ENCODE measurements at regions of chr1 and their contacts with region 1.

Region 1: DNA sequence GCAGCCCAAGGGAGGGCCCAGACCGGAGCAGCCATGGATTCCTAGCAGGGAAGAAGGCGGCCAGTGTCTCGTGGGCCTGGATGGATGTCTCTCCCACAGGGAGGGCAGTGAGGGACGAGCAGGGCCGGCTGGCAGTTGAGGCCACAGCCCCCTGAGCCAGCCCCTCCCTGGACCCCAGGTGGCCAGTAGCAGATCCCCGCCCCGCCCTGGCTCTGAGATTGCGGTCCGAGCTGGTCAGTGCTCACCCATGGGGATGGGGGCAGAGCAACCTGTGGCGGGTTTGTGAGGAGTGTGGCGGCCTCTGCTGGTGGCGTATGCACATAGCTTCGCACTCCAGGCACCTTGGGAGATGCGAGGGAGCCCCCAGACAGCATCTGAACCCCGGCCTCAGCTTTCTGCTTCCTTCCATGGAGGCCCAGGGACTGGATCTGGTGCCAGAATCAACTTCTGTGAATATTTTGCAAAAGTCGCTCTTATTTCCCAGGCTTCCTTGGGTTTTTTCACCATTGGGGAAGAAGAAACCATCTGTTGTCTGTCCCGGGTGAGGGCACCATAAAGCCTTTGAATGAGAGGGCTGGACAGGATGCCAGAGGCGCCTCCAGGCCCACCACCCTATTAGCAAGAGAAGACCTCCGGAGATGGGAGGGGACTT is 8.4 kb upstream of the KCNN3 start:
- DNase-seq: peak; percentile 80 to 91
- ATAC-seq: peak; percentile 94 to 98 (median 96)
- H3K4me3 ChIP-seq: no peak overlapping the region
- H3K27ac ChIP-seq: no peak overlapping the region
- H3K4me1 ChIP-seq: peaks cover 6% of the 10 kb centered on the region
- H3K27me3 ChIP-seq: no peaks in the 10 kb centered on the region
- CTCF ChIP-seq: peak; percentile 92

Region 2: DNA sequence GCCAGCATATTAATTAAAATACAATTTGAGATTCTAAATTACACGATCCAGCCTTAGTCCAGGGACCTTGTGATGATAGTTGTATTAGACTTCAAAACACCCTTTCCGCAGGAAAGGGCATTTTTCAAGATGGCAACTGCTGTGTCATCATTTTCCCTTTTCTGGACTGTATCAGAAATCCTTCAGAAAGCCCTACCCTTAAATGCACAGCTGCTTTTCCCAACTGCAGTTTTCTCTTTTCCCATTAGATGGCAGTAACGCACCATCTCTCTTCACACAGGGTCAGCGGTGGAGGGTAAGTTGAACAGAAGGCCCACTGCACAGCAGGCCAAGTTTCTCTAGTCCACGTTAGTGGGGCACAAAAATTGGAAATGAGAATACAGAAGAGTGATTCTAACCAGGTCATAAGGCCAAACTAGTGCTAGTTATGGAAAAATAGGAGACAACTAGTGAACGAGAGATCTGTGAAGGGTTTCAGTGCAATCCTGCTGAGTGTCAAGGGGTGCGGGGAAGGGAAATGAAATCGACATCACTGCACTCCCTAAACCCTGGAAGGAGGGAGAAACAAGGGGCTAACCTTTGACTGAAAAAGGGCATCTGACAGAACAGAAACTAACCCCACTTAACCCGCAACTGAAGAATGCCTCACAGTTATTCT is 398.6 kb before region 1 on chr1:
- intact Hi-C with region 1: loop called in 1 of 2 experiments (anchors 5 kb)
- DNase-seq: no peak
- ATAC-seq: peak; percentile 80 to 95 (median 88)
- H3K4me3 ChIP-seq: no peak overlapping the region
- H3K27ac ChIP-seq: no peak overlapping the region
- H3K4me1 ChIP-seq: peaks cover 5% of the 10 kb centered on the region
- H3K27me3 ChIP-seq: no peaks in the 10 kb centered on the region
- CTCF ChIP-seq: peak; percentile 93

Region 3: DNA sequence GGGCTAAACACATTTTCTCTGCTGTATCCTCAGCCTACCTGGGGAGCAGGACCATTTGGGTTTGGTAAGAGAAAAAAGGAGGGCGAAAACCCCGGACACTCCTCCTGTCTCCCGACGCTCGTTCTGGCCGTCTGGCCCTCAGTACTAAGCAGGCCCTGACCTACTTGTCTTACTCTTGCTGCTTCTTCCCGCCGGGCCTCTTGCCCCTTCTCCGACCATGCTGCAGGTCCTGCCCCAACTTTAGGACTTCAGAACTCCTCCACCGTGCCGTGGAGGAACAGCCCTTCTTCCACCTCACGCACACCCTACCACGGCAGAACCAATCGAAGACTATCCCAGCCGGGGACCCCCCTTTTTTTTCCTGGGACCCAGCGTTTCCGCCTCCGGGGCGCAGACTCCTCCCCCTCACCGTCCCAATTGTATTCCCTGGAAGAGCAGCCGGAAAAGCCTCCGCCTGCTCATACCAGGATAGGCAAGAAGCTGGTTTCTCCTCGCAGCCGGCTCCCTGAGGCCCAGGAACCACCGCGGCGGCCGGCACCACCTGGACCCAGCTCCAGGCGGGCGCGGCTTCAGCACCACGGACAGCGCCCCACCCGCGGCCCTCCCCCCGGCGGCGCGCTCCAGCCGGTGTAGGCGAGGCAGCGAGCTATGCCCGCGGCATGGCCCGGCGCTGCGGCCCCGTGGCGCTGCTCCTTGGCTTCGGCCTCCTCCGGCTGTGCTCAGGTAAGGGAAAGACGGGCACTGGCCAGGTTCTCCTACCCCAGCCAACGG is 310.9 kb before region 1 on chr1 and contains the start of gene CHRNB2:
- intact Hi-C with region 1: loop called in 1 of 2 experiments (anchors 5 kb)
- DNase-seq: peak; percentile 68 to 83
- ATAC-seq: peak; percentile 93 to 98 (median 96)
- H3K4me3 ChIP-seq: peak within 1 kb of the TSS; percentile 44
- H3K27ac ChIP-seq: no peak within 1 kb of the TSS
- H3K4me1 ChIP-seq: peaks cover 4% of the 10 kb centered on the region
- H3K27me3 ChIP-seq: peaks cover 0 to 6% (median 0%) of the 10 kb centered on the region in 3 donors
- CTCF ChIP-seq: no peak
- total RNA-seq, gene CHRNB2: 0.08 TPM in 1 of 4 donors, not detected in the others

Region 4: GRCh38 chr1:154669464-154670282 is 208.8 kb before region 1 on chr1:
- intact Hi-C with region 1: loop called (anchors 1 kb)
- DNase-seq: peak; percentile 66 to 84
- ATAC-seq: peak; percentile 98 to 100 (median 100)
- H3K4me3 ChIP-seq: no peak overlapping the region
- H3K27ac ChIP-seq: no peak overlapping the region
- H3K4me1 ChIP-seq: no peaks in the 10 kb centered on the region
- H3K27me3 ChIP-seq: no peaks in the 10 kb centered on the region
- CTCF ChIP-seq: peak; percentile 86

Region 5: GRCh38 chr1:154943649-154944400 is 65.3 kb after region 1 on chr1:
- intact Hi-C with region 1: no loop called
- DNase-seq: peak in 1 of 2 donors; percentile 61
- ATAC-seq: peak in 2 of 4 donors; percentile 54 to 73
- H3K4me3 ChIP-seq: no peak overlapping the region
- H3K27ac ChIP-seq: peak overlapping the region; percentile 4
- H3K4me1 ChIP-seq: peaks cover 7% of the 10 kb centered on the region
- H3K27me3 ChIP-seq: no peaks in the 10 kb centered on the region
- CTCF ChIP-seq: peak; percentile 53